ENCODE measurements at regions of chr6 and their contacts with region 1.

Region 1: DNA sequence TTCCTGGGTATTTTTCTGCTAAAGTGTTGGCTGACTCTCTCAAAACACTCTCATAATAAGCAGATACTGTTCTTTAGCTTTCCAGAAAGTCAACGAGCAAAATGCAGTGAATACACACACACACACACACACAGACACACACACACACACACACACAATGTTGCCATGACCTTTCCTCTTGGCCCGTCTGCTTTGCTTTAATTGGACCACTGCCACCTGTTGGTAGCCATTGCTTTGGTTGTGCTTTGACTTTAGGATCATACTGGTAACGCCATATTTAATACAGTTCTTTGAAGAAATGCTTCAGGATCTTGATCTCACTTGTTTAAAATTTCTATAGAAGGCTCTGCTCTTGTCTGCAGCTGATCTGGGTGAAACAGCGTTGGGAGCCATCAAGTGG is 4.4 kb downstream of the FIG4 start:
- DNase-seq: no peak

Region 2: GRCh38 chr6:110053395-110054240 is 358.1 kb after region 1 on chr6:
- intact Hi-C with region 1: loop called in 1 of 2 experiments (anchors 2 kb)
- DNase-seq: no peak

Region 3: GRCh38 chr6:110738899-110739365 is 1043.5 kb after region 1 on chr6:
- intact Hi-C with region 1: no loop called
- DNase-seq: no peak

Measured in posterior vena cava (tissue), 2 donors.